Endothelial cell of umbilical vein (primary cell): ENCODE measurements at regions of chr4 and their contacts with region 1.

Region 1: DNA sequence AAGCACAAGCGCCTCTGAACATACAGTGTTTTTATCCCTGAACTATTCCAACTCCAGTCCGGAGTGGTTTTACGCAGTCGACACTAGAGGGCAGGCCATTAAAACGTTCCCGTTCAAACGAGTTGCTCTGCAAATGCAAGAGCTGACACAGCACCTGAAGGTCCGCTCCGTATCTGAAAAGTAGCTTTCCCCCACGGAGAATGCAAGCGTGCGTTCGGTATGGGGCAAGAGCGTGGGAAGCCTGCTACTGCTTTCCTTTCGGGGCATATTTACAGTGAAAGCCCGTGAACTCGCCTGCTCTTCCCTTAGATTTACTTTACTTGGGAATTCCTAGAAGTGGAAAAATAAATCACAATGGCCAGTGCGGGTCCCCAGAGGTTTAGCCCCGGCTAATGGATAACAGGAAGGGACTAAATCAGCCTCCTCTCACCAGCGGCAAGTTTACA is 190.8 kb downstream of the TSPAN5 start:
- DNase-seq: peak; percentile 86
- H3K4me3 ChIP-seq: peak overlapping the region in 2 of 3 experiments; percentile 9 to 62
- H3K27ac ChIP-seq: no peak overlapping the region
- H3K4me1 ChIP-seq: peaks cover 17% of the 10 kb centered on the region
- H3K27me3 ChIP-seq: no peaks in the 10 kb centered on the region
- CTCF ChIP-seq: peak; percentile 78 to 83
- POLR2A ChIP-seq: no peak

Region 2: GRCh38 chr4:98150092-98150761 is 317.4 kb before region 1 on chr4:
- CTCF ChIA-PET with region 1: interaction called, 9 read pairs
- POLR2A ChIA-PET with region 1: no interaction called
- dilution Hi-C with region 1: no loop called
- intact Hi-C with region 1: loop called (anchors 10 kb)
- DNase-seq: no peak
- H3K4me3 ChIP-seq: no peak overlapping the region
- H3K27ac ChIP-seq: no peak overlapping the region
- H3K4me1 ChIP-seq: peaks cover 6% of the 10 kb centered on the region
- H3K27me3 ChIP-seq: peaks cover 0 to 3% of the 10 kb centered on the region in 2 experiments
- CTCF ChIP-seq: no peak
- POLR2A ChIP-seq: no peak

Region 3: DNA sequence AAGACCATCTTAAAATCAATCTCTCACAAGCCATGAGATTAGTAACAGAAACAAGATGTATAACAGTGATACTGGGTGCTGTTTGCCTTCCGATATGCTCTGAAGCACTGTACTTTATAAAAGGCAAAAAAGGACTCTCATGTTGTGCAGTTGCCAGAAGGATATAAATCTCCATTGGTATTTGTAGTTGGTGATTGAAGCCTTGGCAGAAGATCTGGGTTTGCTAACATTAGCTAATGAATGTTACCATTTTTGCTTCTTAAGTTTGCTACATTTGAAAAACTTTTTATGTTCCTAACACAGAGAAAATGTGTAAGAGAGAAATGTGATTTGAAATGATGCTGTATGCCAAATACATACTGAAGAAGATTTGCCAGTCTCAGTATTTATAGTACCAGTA is 162.1 kb before region 1 on chr4:
- CTCF ChIA-PET with region 1: no interaction called
- POLR2A ChIA-PET with region 1: no interaction called
- dilution Hi-C with region 1: no loop called
- intact Hi-C with region 1: no loop called
- DNase-seq: no peak
- H3K4me3 ChIP-seq: no peak overlapping the region
- H3K27ac ChIP-seq: no peak overlapping the region
- H3K4me1 ChIP-seq: no peaks in the 10 kb centered on the region
- H3K27me3 ChIP-seq: no peaks in the 10 kb centered on the region
- CTCF ChIP-seq: no peak
- POLR2A ChIP-seq: no peak

Region 4: DNA sequence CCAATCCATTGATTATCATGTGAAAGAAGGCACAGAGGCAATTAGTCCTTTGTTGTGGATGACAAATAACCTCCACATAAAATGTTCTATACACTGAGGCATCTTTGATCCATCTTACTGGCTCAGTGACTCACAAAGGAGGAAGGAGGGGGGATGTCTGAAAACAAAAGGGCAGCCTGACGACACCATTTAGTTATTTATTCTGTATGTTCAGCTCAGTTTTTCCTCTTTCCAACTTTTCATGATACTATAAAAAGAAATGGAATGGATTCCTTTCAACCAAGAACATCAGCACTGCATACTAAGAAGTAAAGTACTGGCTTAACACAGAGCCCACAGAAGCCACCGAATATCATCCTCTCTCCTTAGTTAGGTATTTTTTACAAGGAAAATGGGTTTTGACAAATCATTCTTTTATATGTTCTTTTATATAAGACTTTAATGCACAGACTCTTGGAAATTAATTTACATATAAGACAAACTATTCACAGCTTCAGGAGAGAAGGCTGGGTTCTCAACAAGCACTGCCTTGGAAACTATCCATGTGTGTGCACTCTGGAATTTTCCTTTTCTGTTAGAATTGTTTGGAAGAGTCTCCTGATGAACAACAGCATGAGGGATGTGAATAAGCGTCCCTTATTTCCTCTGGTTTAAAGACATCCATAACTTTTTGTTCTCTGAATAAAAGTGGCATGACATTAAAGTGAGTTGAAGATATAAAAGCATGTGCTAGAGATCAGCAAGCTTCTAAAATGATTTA is 55.2 kb after region 1 on chr4:
- CTCF ChIA-PET with region 1: interaction called, 20 read pairs
- POLR2A ChIA-PET with region 1: no interaction called
- dilution Hi-C with region 1: no loop called
- intact Hi-C with region 1: no loop called
- DNase-seq: peak; percentile 91
- H3K4me3 ChIP-seq: peak overlapping the region in 1 of 3 experiments; percentile 45
- H3K27ac ChIP-seq: peak overlapping the region; percentile 97
- H3K4me1 ChIP-seq: peaks cover 52% of the 10 kb centered on the region
- H3K27me3 ChIP-seq: no peaks in the 10 kb centered on the region
- CTCF ChIP-seq: no peak
- POLR2A ChIP-seq: no peak

Region 5: DNA sequence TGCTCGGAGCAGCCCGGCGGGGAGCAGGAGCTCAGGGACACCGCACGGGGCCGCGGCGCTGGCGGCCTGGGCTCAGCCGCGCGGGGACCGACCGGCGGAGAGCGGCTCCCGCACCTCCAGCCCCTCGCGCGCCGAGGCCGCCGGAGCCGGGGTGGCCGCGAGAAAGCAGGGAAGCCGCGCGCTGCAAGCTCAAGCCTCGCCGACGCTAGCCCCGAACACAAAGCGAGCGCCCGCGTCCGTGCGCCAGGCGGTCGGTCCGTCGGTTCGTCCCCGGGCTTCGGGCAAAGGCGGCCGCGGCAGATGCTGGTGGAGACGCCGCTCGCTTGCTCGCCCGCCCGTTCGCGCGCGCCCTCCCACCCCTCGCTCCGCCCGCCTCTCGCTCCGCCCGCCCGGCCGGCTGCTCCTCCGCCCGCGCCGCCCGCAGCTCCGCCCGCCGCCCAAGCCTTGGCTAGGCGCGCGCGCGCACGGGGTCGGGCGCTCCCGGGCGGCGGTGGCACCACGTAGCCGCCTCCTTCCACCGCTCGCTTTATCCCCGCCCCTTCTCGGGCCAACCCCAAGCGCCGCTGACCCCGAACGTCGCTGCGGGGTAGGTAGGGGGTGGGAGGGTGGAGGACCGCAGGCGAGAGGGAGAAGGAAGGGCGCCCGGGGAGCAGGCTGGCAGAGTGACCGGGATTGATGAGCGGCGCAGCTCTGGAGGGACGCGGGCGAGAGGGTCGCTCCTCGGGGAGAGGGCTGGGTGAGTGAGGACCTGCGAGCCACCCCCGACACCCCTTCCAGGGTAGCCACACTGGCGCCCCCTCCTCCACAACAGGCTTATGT is 190.8 kb after region 1 on chr4 and contains the start of gene TSPAN5:
- CTCF ChIA-PET with region 1: interaction called, 59 read pairs
- POLR2A ChIA-PET with region 1: no interaction called
- dilution Hi-C with region 1: no loop called
- intact Hi-C with region 1: loop called (anchors 1 kb)
- DNase-seq: peak; percentile 82
- H3K4me3 ChIP-seq: peak within 1 kb of the TSS; percentile 90 to 97 (median 95)
- H3K27ac ChIP-seq: peak within 1 kb of the TSS; percentile 94
- H3K4me1 ChIP-seq: peaks cover 61% of the 10 kb centered on the region
- H3K27me3 ChIP-seq: no peaks in the 10 kb centered on the region
- CTCF ChIP-seq: no peak
- POLR2A ChIP-seq: peak; percentile 37
- total RNA-seq, gene TSPAN5: 37.6 and 45.1 TPM in 2 replicates

Region 6: GRCh38 chr4:98733601-98734000 is 266.0 kb after region 1 on chr4:
- CTCF ChIA-PET with region 1: interaction called, 27 read pairs
- POLR2A ChIA-PET with region 1: no interaction called
- dilution Hi-C with region 1: no loop called
- intact Hi-C with region 1: loop called (anchors 2 kb)
- DNase-seq: no peak
- H3K4me3 ChIP-seq: no peak overlapping the region
- H3K27ac ChIP-seq: no peak overlapping the region
- H3K4me1 ChIP-seq: peaks cover 10% of the 10 kb centered on the region
- H3K27me3 ChIP-seq: no peaks in the 10 kb centered on the region
- CTCF ChIP-seq: no peak
- POLR2A ChIP-seq: no peak

Region 7: DNA sequence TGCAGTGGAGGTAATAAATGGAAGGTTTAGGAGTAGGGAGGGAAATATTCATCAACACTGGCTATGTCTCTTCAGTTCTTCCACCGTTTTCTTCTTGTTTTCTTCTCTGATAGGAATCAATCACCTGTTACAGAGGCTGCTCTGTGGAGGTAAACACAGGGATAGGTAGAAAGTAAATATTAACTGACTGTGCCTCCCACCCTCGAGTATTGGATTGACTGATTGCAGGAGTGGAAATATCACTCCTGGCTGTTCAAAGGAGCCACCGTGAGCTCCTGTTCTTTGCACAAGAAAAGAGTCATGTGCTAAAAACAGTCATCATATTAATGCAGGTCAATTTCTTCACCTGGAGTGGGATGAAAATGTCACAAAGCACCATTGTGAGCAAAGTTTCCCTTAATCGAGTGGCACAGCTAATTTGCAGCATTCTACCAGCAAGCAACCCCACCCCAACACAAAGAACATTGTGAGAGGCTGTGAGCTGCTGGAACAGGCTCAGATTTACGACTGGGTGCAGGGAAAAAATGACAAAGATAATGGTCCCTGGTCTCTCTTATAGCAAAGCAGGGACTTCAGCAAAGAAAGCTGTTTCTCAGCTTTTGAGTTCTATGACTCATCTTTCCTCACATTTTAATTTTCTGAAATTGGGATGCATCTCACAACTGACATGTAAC is 304.4 kb after region 1 on chr4:
- CTCF ChIA-PET with region 1: no interaction called
- POLR2A ChIA-PET with region 1: no interaction called
- dilution Hi-C with region 1: no loop called
- intact Hi-C with region 1: no loop called
- DNase-seq: no peak
- H3K4me3 ChIP-seq: no peak overlapping the region
- H3K27ac ChIP-seq: no peak overlapping the region
- H3K4me1 ChIP-seq: no peaks in the 10 kb centered on the region
- H3K27me3 ChIP-seq: no peaks in the 10 kb centered on the region
- CTCF ChIP-seq: no peak
- POLR2A ChIP-seq: no peak

Region 8: GRCh38 chr4:98851806-98852205 is 384.2 kb after region 1 on chr4:
- CTCF ChIA-PET with region 1: interaction called, 6 read pairs
- POLR2A ChIA-PET with region 1: no interaction called
- dilution Hi-C with region 1: no loop called
- intact Hi-C with region 1: loop called (anchors 5 kb)
- DNase-seq: no peak
- H3K4me3 ChIP-seq: no peak overlapping the region
- H3K27ac ChIP-seq: no peak overlapping the region
- H3K4me1 ChIP-seq: no peaks in the 10 kb centered on the region
- H3K27me3 ChIP-seq: no peaks in the 10 kb centered on the region
- CTCF ChIP-seq: no peak
- POLR2A ChIP-seq: no peak

Region 9: DNA sequence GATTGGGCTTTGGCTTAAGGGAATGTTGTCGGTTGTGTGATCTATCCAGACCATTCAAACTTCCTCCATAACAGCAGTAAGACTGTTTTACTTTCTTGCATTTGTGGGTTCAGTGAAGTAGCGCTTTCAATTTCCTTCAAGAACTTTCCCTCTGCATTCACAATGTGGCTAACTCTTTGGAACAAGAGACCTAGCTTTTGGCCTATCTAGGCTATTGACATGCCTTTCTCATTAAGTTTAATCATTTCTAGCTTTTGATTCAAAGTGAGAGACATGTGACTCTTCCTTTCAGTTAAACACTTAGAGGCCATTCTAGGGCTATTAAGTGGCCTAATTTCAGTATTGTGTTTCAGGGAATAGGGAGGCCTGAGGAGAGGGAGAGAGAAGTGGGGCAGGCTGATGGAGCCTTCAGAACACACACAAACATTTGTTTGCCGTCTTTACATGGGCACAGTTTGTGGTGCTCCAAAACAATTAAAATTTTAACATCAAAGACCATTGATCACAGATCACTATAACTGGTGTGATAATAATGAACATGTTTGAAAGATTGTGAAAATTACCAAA is 586.9 kb after region 1 on chr4:
- CTCF ChIA-PET with region 1: interaction called, 52 read pairs
- POLR2A ChIA-PET with region 1: no interaction called
- dilution Hi-C with region 1: no loop called
- intact Hi-C with region 1: loop called (anchors 1 kb)
- DNase-seq: no peak
- H3K4me3 ChIP-seq: no peak overlapping the region
- H3K27ac ChIP-seq: no peak overlapping the region
- H3K4me1 ChIP-seq: peaks cover 8% of the 10 kb centered on the region
- H3K27me3 ChIP-seq: no peaks in the 10 kb centered on the region
- CTCF ChIP-seq: no peak
- POLR2A ChIP-seq: no peak